ENCODE measurements at regions of chr18 and their contacts with region 1.

Region 1: DNA sequence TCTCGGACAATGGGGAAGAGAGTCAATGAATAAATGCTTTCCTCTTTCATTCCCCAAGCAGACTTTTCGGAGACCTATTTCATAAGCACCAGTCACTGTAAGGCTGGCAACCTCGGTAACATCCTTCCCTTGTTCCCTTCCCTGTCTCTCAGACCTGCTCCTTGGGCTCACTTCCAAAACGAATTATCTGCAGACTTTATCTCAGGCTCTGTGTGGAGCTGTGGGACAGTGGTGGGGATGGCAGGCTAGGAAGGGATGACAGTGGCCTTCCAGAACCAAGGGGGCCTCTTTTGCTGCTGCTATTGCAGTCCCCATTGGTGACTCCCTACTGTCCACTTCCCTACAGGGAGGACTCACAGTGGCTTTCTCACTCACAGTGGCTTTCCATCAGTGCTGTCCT is 185.6 kb upstream of the MEX3C start:
- DNase-seq: no peak
- H3K4me3 ChIP-seq: no peak overlapping the region
- H3K27ac ChIP-seq: no peak overlapping the region
- H3K4me1 ChIP-seq: no peaks in the 10 kb centered on the region
- H3K27me3 ChIP-seq: no peaks in the 10 kb centered on the region
- CTCF ChIP-seq: no peak
- EP300 ChIP-seq: no peak
- POLR2A ChIP-seq: no peak
- RAD21 ChIP-seq: peak; percentile 27 to 39; a peak in 2 of 4 replicates

Region 2: GRCh38 chr18:51278045-51278649 is 105.0 kb before region 1 on chr18:
- CTCF ChIA-PET with region 1: interaction called, 10 read pairs
- POLR2A ChIA-PET with region 1: no interaction called
- DNase-seq: peak; percentile 27 to 92
- H3K4me3 ChIP-seq: no peak overlapping the region
- H3K27ac ChIP-seq: no peak overlapping the region
- H3K4me1 ChIP-seq: peaks cover 0 to 11% (median 3%) of the 10 kb centered on the region in 4 experiments; a peak in 3 of 7 replicates
- H3K27me3 ChIP-seq: no peaks in the 10 kb centered on the region
- CTCF ChIP-seq: peak; percentile 83 to 94 (median 93)
- EP300 ChIP-seq: no peak
- POLR2A ChIP-seq: no peak
- RAD21 ChIP-seq: peak; percentile 89 to 95

Region 3: DNA sequence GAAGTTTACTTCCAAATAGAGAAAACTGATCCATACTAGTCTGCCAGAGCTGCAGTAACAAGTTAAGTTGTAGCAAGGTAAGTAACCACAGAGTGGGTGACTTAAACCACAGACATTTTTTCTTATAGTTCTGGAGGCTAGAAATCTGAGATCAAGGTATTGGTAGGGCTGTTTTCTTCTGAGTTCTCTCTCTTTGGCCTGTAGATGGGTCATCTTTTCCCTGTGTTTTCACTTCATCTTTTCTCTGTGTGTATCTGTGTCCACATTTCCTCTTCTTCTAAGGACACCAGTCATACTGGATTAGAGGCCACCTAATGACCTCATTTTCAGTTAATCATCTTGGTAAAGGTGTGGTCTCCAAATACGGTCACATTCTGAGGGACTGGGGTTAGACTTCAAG is 42.8 kb before region 1 on chr18:
- CTCF ChIA-PET with region 1: no interaction called
- POLR2A ChIA-PET with region 1: no interaction called
- DNase-seq: no peak
- H3K4me3 ChIP-seq: no peak overlapping the region
- H3K27ac ChIP-seq: no peak overlapping the region
- H3K4me1 ChIP-seq: no peaks in the 10 kb centered on the region
- H3K27me3 ChIP-seq: no peaks in the 10 kb centered on the region
- CTCF ChIP-seq: no peak
- EP300 ChIP-seq: no peak
- POLR2A ChIP-seq: no peak
- RAD21 ChIP-seq: no peak

Region 4: DNA sequence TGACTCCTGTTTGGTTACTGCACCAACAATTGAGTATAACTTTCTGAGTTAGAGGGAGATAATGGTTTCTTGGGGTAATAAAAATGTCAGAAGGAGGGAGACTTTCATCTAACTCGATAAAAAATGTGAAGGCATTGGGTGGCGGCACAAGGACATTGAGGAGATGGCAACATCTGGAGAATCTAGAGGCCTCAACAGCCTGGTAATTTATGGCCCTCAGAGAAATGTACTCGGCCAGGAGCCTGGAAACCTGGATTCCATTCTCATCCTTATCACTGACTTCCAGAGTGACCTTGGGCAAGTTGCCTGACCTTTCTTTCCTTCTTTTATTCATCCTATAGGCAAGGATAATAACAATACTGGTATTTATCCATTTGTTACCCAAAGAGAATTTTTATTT is 12.1 kb before region 1 on chr18:
- CTCF ChIA-PET with region 1: interaction called, 12 read pairs
- POLR2A ChIA-PET with region 1: no interaction called
- DNase-seq: no peak
- H3K4me3 ChIP-seq: no peak overlapping the region
- H3K27ac ChIP-seq: no peak overlapping the region
- H3K4me1 ChIP-seq: no peaks in the 10 kb centered on the region
- H3K27me3 ChIP-seq: no peaks in the 10 kb centered on the region
- CTCF ChIP-seq: no peak
- EP300 ChIP-seq: no peak
- POLR2A ChIP-seq: no peak
- RAD21 ChIP-seq: no peak

Region 5: GRCh38 chr18:51398104-51398503 is 15.0 kb after region 1 on chr18:
- CTCF ChIA-PET with region 1: interaction called, 23 read pairs
- POLR2A ChIA-PET with region 1: no interaction called
- DNase-seq: no peak
- H3K4me3 ChIP-seq: no peak overlapping the region
- H3K27ac ChIP-seq: no peak overlapping the region
- H3K4me1 ChIP-seq: peaks cover 0 to 6% (median 3%) of the 10 kb centered on the region in 4 experiments; a peak in 3 of 7 replicates
- H3K27me3 ChIP-seq: no peaks in the 10 kb centered on the region
- CTCF ChIP-seq: no peak
- EP300 ChIP-seq: no peak
- POLR2A ChIP-seq: no peak
- RAD21 ChIP-seq: no peak

Region 6: DNA sequence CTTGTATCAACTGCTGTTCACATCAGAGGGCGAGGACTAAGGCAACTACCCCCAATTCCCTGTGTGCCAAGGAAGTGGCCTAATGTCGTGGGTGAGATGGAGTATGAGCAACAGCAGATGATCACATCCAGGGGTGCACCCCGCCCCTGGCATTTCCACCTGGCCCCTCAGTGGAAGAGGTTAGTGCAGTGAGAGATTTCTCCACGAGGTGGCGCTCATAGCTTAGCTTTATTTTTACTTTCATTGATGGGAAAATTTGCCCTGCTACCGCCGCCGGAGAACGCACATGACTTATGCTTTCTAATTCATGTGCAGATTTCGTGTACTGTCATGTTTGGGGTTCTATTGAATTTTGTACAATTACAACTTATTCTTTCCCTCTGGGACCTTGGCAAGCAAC is 285.0 kb after region 1 on chr18:
- CTCF ChIA-PET with region 1: no interaction called
- POLR2A ChIA-PET with region 1: no interaction called
- DNase-seq: peak in 1 of 2 experiments; percentile 90
- H3K4me3 ChIP-seq: no peak overlapping the region; a peak in 1 of 8 replicates
- H3K27ac ChIP-seq: no peak overlapping the region
- H3K4me1 ChIP-seq: peaks cover 0 to 3% (median 1%) of the 10 kb centered on the region in 4 experiments; a peak in 5 of 7 replicates
- H3K27me3 ChIP-seq: no peaks in the 10 kb centered on the region
- CTCF ChIP-seq: peak; percentile 63 to 81 (median 76)
- EP300 ChIP-seq: no peak
- POLR2A ChIP-seq: no peak
- RAD21 ChIP-seq: peak; percentile 94 to 95

Region 7: DNA sequence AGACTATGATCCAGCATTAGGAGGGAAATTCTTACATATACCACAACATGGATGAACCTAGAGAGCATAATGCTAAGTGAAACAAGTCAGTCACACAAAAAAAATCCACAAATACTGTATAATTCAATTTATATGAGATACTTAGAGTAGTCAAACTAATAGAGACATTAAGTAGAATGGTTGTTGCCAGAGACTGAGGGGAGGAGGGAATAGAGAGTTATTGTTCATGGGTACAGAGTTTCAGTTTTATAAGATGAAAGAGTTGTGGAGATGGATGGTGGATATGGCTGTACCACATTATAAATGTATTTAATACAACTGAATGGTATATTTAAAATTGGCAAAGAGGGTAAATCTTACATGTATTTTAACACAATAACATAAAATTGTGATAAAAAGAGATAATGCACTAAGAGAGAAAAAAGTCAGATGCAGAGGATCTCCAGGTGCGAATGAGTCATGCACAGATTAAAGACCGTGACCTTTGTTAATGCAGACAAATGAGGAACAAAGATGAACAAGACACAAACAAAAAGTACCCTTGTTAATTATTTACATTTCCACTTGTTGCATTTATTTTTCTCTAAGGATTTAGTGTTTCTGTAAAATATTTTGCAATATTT is 356.0 kb after region 1 on chr18:
- CTCF ChIA-PET with region 1: no interaction called
- POLR2A ChIA-PET with region 1: no interaction called
- DNase-seq: no peak
- H3K4me3 ChIP-seq: no peak overlapping the region
- H3K27ac ChIP-seq: no peak overlapping the region
- H3K4me1 ChIP-seq: no peaks in the 10 kb centered on the region
- H3K27me3 ChIP-seq: no peaks in the 10 kb centered on the region
- CTCF ChIP-seq: no peak
- EP300 ChIP-seq: no peak
- POLR2A ChIP-seq: no peak
- RAD21 ChIP-seq: no peak